ENCODE measurements at regions of chr7 and their contacts with region 1.

Region 1: DNA sequence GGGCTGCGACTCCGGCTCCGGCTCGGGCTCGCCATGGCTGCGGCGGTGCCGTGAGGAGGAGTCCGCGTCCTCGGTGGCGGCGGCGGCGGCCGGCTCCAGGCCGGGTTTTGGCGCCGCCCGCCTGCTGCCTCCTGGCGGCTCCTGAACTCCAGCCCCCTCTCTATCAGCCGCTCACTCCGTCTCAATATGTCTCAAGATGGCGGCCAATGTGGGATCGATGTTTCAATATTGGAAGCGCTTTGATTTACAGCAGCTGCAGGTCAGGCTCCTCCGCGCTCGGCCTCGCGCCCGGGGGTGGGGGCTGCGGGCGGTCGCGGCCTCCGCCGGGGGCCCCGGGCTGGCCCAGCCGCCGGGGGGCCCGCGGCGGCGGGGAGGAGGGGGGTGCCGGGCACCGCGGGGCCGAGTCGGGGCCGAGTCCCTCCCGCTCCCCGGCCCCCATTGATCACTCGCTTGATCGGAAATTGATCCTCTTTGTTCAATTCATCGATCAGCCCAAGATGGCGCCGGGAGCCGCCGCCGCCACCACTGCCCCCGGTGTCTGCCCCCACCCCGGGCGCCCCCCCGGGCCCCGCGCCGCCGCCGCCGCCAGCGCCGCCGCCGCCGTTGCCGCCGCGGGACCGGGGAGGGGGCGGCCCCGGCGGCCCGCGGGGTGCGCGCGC is 1.5 kb upstream of the CUX1 start:
- DNase-seq: peak; percentile 75
- ATAC-seq: peak; percentile 58
- H3K4me3 ChIP-seq: peak overlapping the region; percentile 61
- H3K27ac ChIP-seq: peak overlapping the region; percentile 41
- H3K4me1 ChIP-seq: peaks cover 28% of the 10 kb centered on the region
- H3K27me3 ChIP-seq: no peaks in the 10 kb centered on the region
- CTCF ChIP-seq: no peak

Region 2: DNA sequence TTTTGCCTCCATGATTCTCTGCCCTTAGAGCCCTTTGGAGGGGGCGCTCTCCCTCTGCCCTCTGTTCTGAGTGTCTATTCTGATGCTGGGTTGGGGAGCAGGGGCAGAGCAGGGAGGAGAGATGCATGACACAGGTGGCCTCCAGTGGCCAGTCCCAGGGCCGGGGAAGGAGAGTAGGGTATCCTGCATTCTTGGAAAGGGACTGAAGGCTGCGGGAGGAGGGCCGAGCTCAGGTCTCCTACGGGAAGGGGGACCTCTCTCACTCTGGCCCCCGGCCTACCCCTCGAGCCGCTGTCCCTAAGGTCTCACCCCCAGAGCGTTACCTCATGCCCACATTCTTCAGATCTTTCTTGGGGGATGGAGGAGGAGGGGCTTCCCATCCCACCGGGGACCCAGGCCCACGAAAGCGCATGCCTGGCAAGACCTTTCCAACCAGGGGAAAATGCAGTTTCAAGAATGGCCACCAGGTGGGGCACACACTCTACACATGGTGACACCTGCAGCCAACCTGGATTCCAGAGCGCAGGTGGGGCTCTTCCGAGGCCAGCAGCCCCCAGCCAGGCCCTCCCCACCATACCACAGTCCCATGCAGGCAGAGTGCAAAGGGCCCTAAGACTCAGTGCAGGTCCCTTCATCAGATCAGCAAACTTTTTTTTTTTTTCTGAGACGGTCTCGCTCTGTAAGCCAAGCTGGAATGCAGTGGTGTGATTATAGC is 273.3 kb before region 1 on chr7:
- CTCF ChIA-PET with region 1: interaction called, 5 read pairs
- POLR2A ChIA-PET with region 1: no interaction called
- intact Hi-C with region 1: loop called (anchors 2 kb)
- DNase-seq: peak; percentile 75
- ATAC-seq: peak; percentile 62
- H3K4me3 ChIP-seq: no peak overlapping the region
- H3K27ac ChIP-seq: no peak overlapping the region
- H3K4me1 ChIP-seq: no peaks in the 10 kb centered on the region
- H3K27me3 ChIP-seq: no peaks in the 10 kb centered on the region
- CTCF ChIP-seq: peak; percentile 88

Region 3: GRCh38 chr7:101688183-101688831 is 127.7 kb before region 1 on chr7:
- CTCF ChIA-PET with region 1: no interaction called
- POLR2A ChIA-PET with region 1: no interaction called
- intact Hi-C with region 1: loop called (anchors 1 kb)
- DNase-seq: peak; percentile 70
- ATAC-seq: peak; percentile 94
- H3K4me3 ChIP-seq: peak overlapping the region; percentile 40
- H3K27ac ChIP-seq: no peak overlapping the region
- H3K4me1 ChIP-seq: no peaks in the 10 kb centered on the region
- H3K27me3 ChIP-seq: no peaks in the 10 kb centered on the region
- CTCF ChIP-seq: peak; percentile 82

Region 4: GRCh38 chr7:101856473-101857357 is 40.8 kb after region 1 on chr7:
- CTCF ChIA-PET with region 1: interaction called, 4 read pairs
- POLR2A ChIA-PET with region 1: interaction called, 12 read pairs
- intact Hi-C with region 1: loop called (anchors 2 kb)
- DNase-seq: peak; percentile 94
- ATAC-seq: peak; percentile 96
- H3K4me3 ChIP-seq: peak overlapping the region; percentile 56
- H3K27ac ChIP-seq: peak overlapping the region; percentile 90
- H3K4me1 ChIP-seq: peaks cover 23% of the 10 kb centered on the region
- H3K27me3 ChIP-seq: no peaks in the 10 kb centered on the region
- CTCF ChIP-seq: peak; percentile 62

Region 5: DNA sequence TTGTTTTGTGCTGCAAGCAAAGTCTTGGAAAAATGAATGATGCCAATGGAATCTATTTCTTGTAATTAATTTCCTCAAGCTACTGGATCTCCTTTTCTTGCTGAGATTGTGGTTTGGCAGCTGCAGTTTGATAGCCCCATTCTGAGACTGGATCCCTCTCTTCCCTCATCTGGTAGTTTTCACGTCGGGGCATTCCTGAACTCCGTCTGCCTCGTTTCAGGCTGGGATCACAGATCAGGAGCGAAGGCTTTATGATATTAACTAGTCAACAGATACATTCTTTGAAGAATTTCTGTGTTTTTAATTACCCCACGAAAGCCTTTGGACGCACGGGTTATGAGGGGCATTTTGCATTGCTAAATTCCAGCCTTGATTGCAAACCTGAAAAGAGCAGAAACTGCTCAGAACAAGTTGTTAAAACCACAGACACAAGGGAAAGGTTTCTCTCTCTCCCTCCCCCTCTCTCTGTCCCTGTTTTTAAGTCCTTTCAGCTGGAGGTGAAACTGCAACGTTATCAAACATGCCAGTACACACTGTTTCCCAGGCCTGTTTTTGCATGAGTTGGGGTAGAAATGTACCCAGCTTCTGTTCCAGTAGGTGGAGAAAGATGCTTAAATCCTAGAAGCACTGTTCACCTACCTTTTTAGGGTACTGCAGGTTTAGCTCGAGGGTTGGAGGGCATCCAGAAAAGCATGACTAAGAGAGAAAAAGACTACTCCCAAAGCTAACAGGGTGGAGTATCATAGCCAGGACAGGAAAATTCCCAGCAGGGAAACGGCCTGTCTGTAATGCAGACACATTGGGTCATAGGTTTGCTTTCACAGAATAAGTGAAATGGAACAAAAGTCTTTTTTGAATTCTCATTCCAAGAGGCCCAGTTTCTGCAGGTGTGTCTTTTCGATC is 125.8 kb after region 1 on chr7:
- CTCF ChIA-PET with region 1: no interaction called
- POLR2A ChIA-PET with region 1: no interaction called
- intact Hi-C with region 1: loop called (anchors 2 kb)
- DNase-seq: peak; percentile 96
- ATAC-seq: peak; percentile 93
- H3K4me3 ChIP-seq: peak overlapping the region; percentile 48; the same call in 1 of the 2 replicates
- H3K27ac ChIP-seq: peak overlapping the region; percentile 98
- H3K4me1 ChIP-seq: peaks cover 37% of the 10 kb centered on the region
- H3K27me3 ChIP-seq: no peaks in the 10 kb centered on the region
- CTCF ChIP-seq: peak; percentile 41

Region 6: DNA sequence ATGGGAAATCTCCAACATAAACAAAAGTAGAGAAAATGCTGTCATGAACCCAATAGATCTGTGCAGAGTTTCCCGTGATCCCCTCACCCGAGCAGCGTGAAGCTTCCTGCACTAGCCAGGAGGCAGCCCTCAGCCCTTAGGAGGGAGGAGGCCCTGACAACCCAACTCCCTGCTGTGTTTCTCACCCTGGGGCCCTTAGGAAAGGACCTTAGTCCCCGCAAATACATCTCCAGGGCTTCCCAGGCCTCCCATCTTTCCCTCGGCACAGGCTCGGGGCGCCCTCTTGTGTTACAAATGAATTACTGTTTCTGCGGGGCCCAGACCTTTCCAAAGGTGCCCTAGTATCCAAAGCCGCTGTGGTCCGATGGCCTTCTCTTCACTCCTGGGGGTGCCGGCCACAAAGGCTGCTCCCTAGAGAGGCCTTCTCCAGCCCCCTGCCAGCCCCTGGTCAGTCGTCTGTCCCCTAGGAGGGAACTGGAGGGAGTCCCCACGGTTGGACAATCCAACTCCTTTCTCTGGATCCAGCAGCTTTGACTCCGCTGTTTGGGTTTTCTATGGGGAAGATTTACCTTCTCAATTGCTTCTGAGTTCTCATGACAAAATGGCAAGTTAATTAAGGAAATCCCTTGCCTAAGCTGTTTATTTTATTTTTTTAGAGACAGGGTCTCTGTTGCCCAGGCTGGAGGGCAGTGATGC is 420.8 kb after region 1 on chr7:
- CTCF ChIA-PET with region 1: no interaction called
- POLR2A ChIA-PET with region 1: no interaction called
- intact Hi-C with region 1: loop called (anchors 2 kb)
- DNase-seq: peak; percentile 70
- ATAC-seq: peak; percentile 97
- H3K4me3 ChIP-seq: no peak overlapping the region
- H3K27ac ChIP-seq: no peak overlapping the region
- H3K4me1 ChIP-seq: no peaks in the 10 kb centered on the region
- H3K27me3 ChIP-seq: no peaks in the 10 kb centered on the region
- CTCF ChIP-seq: peak; percentile 87

Region 7: GRCh38 chr7:102953406-102953805 is 1137.4 kb after region 1 on chr7:
- CTCF ChIA-PET with region 1: no interaction called
- POLR2A ChIA-PET with region 1: no interaction called
- intact Hi-C with region 1: no loop called
- DNase-seq: no peak
- ATAC-seq: no peak
- H3K4me3 ChIP-seq: no peak overlapping the region
- H3K27ac ChIP-seq: no peak overlapping the region
- H3K4me1 ChIP-seq: no peaks in the 10 kb centered on the region
- H3K27me3 ChIP-seq: no peaks in the 10 kb centered on the region
- CTCF ChIP-seq: no peak